ENCODE measurements at regions of chr9 and their contacts with region 1.

Region 1: GRCh38 chr9:34252670-34253459 is 74.0 kb downstream of the UBAP1 start:
- DNase-seq: peak in 8 of 9 experiments; percentile 29 to 79 (median 66)
- ATAC-seq: peak; percentile 75
- H3K4me3 ChIP-seq: no peak overlapping the region
- H3K4me3 Mint-ChIP-seq: no peak overlapping the region
- H3K27ac ChIP-seq: no peak overlapping the region
- H3K27ac Mint-ChIP-seq: peak overlapping the region; percentile 52
- H3K4me1 ChIP-seq: peaks cover 23% of the 10 kb centered on the region
- H3K4me1 Mint-ChIP-seq: peaks cover 21% of the 10 kb centered on the region
- H3K27me3 ChIP-seq: no peaks in the 10 kb centered on the region
- H3K27me3 Mint-ChIP-seq: no peaks in the 10 kb centered on the region
- CTCF ChIP-seq: peak; percentile 92

Region 2: GRCh38 chr9:34010979-34011378 is 241.9 kb before region 1 on chr9:
- CTCF ChIA-PET with region 1: interaction called, 6 read pairs
- POLR2A ChIA-PET with region 1: no interaction called
- intact Hi-C with region 1: loop called (anchors 1 kb)
- DNase-seq: peak in 3 of 9 experiments; percentile 17 to 51 (median 34)
- ATAC-seq: peak; percentile 42
- H3K4me3 ChIP-seq: no peak overlapping the region
- H3K4me3 Mint-ChIP-seq: no peak overlapping the region
- H3K27ac ChIP-seq: no peak overlapping the region
- H3K27ac Mint-ChIP-seq: no peak overlapping the region
- H3K4me1 ChIP-seq: no peaks in the 10 kb centered on the region
- H3K4me1 Mint-ChIP-seq: no peaks in the 10 kb centered on the region
- H3K27me3 ChIP-seq: no peaks in the 10 kb centered on the region
- H3K27me3 Mint-ChIP-seq: no peaks in the 10 kb centered on the region
- CTCF ChIP-seq: peak; percentile 64

Region 3: DNA sequence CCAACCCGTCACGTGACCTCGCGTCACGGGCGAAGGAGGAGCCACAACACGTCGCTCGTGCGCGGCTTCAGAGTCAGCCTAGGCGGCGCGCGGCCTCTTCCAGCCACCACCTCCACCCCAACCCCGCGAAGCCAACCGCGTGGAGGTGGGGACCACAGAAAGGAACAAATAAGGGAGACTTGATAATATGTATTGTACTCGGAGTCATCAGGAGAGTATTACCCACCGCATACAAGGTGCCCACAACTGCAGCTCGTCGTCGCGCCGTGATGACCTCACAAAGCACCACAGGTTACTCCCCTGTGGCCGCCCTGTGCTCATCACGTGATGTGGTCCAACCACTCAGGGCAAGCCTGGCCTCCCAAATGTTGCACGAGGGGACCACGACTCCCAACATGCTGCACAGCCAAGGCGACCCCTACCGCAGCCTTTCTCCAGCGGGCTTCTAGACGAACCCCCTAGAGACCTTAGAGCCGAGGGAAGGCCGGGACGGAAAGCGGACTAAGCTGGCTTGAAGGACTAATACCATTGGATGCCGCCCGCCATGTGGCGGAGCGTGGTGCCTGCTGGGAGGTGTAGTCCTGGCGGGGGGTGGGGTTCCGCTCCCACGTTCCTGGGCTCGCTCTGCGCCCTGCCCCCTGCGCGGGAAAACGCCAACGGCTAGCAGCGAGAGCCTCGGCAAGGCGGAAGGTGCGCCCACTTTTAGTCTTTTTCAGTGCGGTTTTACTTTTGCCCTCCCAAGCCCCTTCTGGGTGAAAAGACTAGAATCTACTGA is 203.8 kb before region 1 on chr9:
- CTCF ChIA-PET with region 1: interaction called, 3 read pairs
- POLR2A ChIA-PET with region 1: no interaction called
- intact Hi-C with region 1: loop called in 1 of 2 experiments (anchors 1 kb)
- DNase-seq: peak; percentile 92 to 99 (median 97)
- ATAC-seq: peak; percentile 81
- H3K4me3 ChIP-seq: peak overlapping the region; percentile 76 to 79
- H3K4me3 Mint-ChIP-seq: peak overlapping the region; percentile 97
- H3K27ac ChIP-seq: peak overlapping the region; percentile 87 to 95
- H3K27ac Mint-ChIP-seq: peak overlapping the region; percentile 100
- H3K4me1 ChIP-seq: peaks cover 23% of the 10 kb centered on the region
- H3K4me1 Mint-ChIP-seq: peaks cover 29% of the 10 kb centered on the region
- H3K27me3 ChIP-seq: no peaks in the 10 kb centered on the region
- H3K27me3 Mint-ChIP-seq: no peaks in the 10 kb centered on the region
- CTCF ChIP-seq: no peak

Region 4: DNA sequence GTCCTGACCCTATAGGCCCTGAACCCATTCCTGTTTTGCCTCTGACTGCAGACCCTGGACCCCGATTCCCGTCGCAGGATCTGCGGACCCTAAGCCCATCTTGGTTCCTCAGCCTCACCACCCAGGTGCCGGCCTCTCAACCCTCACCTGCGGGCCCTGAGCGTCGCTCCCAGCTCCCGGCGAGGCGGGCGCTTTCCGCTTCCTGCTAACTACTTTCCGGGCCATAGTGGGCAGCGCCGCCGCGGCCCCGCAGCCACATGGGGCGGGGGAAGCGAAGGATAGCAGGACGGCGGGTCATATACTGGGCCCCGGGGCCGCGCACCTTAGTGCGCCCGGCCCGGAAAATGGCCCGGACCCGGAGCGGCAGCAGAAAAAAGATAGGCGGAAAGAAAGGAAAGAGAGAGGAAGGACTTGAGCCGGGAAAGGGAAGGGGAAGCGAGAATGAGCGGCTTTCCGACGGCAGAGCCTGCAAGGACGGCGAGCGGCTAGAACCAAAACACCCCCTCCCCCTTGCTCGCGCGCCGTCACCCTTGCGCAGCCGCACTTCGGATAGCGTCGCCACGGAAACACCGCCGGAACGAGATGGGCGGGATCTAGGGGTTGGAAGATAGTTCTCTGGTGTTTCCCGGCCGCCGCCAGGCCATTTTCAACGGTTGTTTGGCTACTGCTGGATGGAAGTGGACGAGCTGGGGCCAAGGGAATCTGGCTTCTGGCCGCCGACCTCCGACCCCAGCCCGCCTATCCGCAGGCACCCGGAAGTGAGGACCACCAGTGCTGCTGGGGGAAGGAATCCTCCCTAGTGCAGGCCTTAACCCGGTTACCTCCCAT is 126.4 kb before region 1 on chr9 and contains the start of gene DCAF12:
- CTCF ChIA-PET with region 1: interaction called, 20 read pairs
- POLR2A ChIA-PET with region 1: no interaction called
- intact Hi-C with region 1: loop called (anchors 2 kb)
- DNase-seq: peak; percentile 82 to 96 (median 90)
- ATAC-seq: peak; percentile 96
- H3K4me3 ChIP-seq: peak within 1 kb of the TSS; percentile 89 to 96
- H3K4me3 Mint-ChIP-seq: peak within 1 kb of the TSS; percentile 98
- H3K27ac ChIP-seq: peak within 1 kb of the TSS; percentile 79 to 92
- H3K27ac Mint-ChIP-seq: peak within 1 kb of the TSS; percentile 97
- H3K4me1 ChIP-seq: peaks cover 39% of the 10 kb centered on the region
- H3K4me1 Mint-ChIP-seq: peaks cover 49% of the 10 kb centered on the region
- H3K27me3 ChIP-seq: no peaks in the 10 kb centered on the region
- H3K27me3 Mint-ChIP-seq: no peaks in the 10 kb centered on the region
- CTCF ChIP-seq: no peak
- total RNA-seq, gene DCAF12: 4.0 to 4.1 TPM

Region 5: DNA sequence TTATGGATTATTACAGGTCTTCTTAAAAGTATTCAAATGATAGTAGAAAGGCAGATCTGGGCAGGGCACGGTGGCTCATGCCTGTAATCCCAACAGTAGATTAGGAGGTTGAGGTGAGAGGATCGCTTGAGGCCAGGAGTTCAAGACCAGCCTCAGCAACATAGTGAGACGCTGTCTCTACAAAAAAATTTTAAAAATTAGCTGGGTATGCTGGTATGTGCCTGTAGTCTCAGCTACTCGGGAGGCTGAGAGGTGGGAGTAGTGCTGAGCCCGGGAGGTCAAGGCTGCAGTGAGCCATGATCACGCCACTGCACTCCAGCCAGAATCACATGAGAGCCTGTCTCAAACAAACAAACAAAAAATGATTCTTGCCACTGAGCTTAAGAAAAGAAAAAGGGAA is 30.4 kb before region 1 on chr9:
- CTCF ChIA-PET with region 1: interaction called, 10 read pairs
- POLR2A ChIA-PET with region 1: no interaction called
- intact Hi-C with region 1: no loop called
- DNase-seq: no peak
- ATAC-seq: no peak
- H3K4me3 ChIP-seq: no peak overlapping the region
- H3K4me3 Mint-ChIP-seq: no peak overlapping the region
- H3K27ac ChIP-seq: no peak overlapping the region
- H3K27ac Mint-ChIP-seq: no peak overlapping the region
- H3K4me1 ChIP-seq: peaks cover 3% of the 10 kb centered on the region
- H3K4me1 Mint-ChIP-seq: peaks cover 23% of the 10 kb centered on the region
- H3K27me3 ChIP-seq: no peaks in the 10 kb centered on the region
- H3K27me3 Mint-ChIP-seq: no peaks in the 10 kb centered on the region
- CTCF ChIP-seq: no peak

Region 6: DNA sequence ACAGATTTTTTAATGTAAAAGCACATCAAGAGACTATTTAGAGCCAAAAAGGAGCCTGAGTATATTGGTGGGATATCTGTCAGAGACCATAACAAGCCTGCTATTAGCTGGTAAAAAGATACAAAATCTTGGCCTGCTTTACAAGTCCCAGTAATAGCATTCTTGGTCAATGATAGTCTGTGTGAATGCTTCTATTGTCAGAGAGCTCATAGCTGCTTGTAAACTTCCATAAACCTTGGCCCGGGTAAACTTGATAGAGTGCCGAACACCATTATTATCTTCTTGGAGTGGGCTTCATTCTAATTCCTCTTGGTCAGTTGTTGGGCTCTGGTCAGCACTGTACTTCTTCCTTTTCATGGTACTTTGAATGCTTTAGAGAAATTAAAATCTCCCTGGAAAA is 10.0 kb before region 1 on chr9:
- CTCF ChIA-PET with region 1: interaction called, 36 read pairs
- POLR2A ChIA-PET with region 1: no interaction called
- intact Hi-C with region 1: no loop called
- DNase-seq: no peak
- ATAC-seq: no peak
- H3K4me3 ChIP-seq: no peak overlapping the region
- H3K4me3 Mint-ChIP-seq: no peak overlapping the region
- H3K27ac ChIP-seq: no peak overlapping the region
- H3K27ac Mint-ChIP-seq: peak overlapping the region; percentile 41
- H3K4me1 ChIP-seq: no peaks in the 10 kb centered on the region
- H3K4me1 Mint-ChIP-seq: peaks cover 44% of the 10 kb centered on the region
- H3K27me3 ChIP-seq: no peaks in the 10 kb centered on the region
- H3K27me3 Mint-ChIP-seq: no peaks in the 10 kb centered on the region
- CTCF ChIP-seq: no peak

Region 7: DNA sequence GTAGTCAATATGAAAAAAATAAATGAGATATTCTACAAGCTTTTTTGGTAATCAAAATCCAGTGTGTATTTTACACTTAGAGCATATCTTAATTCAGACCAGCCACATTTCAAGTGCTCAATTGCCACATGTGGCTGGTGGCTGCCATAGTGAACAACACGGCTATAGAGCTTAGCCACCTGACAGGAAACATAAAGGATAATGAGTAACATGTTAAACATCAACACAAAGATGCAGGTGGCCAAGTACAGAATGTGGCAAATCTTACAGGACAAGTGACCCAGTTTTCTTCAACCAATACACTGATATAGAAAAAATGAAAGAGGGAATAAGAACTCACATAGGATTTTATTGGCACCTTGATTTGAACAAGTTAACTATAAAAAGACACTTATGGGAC is 14.8 kb after region 1 on chr9:
- CTCF ChIA-PET with region 1: interaction called, 20 read pairs
- POLR2A ChIA-PET with region 1: interaction called, 3 read pairs
- intact Hi-C with region 1: no loop called
- DNase-seq: no peak
- ATAC-seq: no peak
- H3K4me3 ChIP-seq: no peak overlapping the region
- H3K4me3 Mint-ChIP-seq: no peak overlapping the region
- H3K27ac ChIP-seq: no peak overlapping the region
- H3K27ac Mint-ChIP-seq: no peak overlapping the region
- H3K4me1 ChIP-seq: no peaks in the 10 kb centered on the region
- H3K4me1 Mint-ChIP-seq: peaks cover 5% of the 10 kb centered on the region
- H3K27me3 ChIP-seq: no peaks in the 10 kb centered on the region
- H3K27me3 Mint-ChIP-seq: no peaks in the 10 kb centered on the region
- CTCF ChIP-seq: no peak

Measured in CD8-positive, alpha-beta T cell (primary cell).